Activated T-helper 1 cell treated with anti-CD3 and anti-CD28 coated beads, Interleukin-12 subunit alpha, Interleukin-12 subunit beta, Interleukin-2, Interleukin-4 antibody, amounts not matched to agents 30 ng/mL and 10 ng/mL and 1 ng/mL, durations not matched to agents 14 hours and 24 hours and 36 hours (primary cell): ENCODE measurements at regions of chr7 and their contacts with region 1.

Region 1: DNA sequence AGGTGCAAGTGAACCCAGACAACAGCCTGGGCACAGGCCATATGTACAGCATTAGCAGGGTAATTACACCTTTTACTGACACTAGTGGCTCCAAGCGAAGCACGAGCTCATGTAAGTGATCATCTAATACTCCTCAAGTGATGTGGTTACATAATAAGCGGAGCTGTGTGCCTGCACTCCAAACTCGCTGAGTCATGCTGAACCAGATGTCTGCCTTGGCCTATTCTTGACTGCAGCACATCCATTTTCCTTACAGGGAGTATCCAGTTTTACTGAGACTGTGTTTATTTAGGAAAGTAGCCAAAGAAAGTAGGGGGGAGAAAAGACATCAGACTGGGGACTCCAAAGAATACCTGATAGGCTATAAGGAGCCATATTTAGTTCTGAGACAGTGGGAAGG is 90.1 kb downstream of the GRM3 start:
- DNase-seq: no peak
- H3K4me3 Mint-ChIP-seq: no peak overlapping the region
- H3K27ac Mint-ChIP-seq: no peak overlapping the region
- H3K4me1 Mint-ChIP-seq: no peaks in the 10 kb centered on the region
- H3K27me3 Mint-ChIP-seq: no peaks in the 10 kb centered on the region

Region 2: DNA sequence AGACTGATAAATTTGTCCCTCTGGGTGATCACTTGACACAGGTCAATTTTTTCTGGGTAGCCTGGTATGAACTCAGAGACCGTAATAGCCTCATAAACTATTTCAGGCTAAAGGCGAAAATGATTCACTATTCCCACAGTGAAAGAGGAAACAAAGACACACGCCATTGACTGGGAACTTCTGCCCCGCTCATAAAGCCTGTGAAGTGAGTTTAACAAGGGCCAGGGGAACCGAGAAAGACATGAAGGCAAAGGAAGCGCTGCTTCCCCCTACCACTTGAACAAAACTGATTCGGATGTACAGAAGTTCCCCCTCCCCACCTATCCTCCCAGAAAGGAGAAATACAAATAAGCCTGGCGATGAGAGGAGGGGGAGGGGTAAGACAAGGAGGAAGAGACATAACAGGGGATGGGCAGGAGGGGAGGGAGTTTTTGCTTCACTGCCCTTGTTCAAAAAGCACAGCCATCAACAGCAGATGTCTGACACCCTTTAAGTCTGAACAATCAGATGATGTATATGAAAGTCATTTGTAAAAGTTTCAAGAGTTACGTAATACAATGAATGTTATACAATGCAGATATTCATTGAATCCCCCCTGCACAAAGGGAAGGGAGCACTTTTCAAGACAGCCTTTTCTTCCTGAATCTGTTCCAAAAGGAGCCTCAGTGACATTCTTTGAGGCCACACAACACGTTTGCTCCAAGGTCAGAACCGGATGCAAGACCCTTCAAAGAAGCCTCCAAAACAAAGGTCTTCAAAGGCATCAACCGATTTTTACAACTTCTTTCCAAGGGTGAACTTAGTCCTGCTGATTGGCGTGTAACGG is 741.0 kb after region 1 on chr7:
- intact Hi-C with region 1: loop called (anchors 5 kb)
- DNase-seq: no peak
- H3K4me3 Mint-ChIP-seq: peak overlapping the region; percentile 47
- H3K27ac Mint-ChIP-seq: no peak overlapping the region
- H3K4me1 Mint-ChIP-seq: peaks cover 10% of the 10 kb centered on the region
- H3K27me3 Mint-ChIP-seq: peaks cover 46% of the 10 kb centered on the region